Adrenal gland (tissue), 19 donors: ENCODE measurements at regions of chr22 and their contacts with region 1.

Region 1: GRCh38 chr22:23385291-23386244 is 194.5 kb downstream of the IGLL1 start:
- DNase-seq: peak; percentile 66 to 93 (median 85)
- H3K4me3 ChIP-seq: no peak overlapping the region
- H3K27ac ChIP-seq: no peak overlapping the region
- H3K4me1 ChIP-seq: no peaks in the 10 kb centered on the region
- H3K27me3 ChIP-seq: no peaks in the 10 kb centered on the region
- CTCF ChIP-seq: peak; percentile 94 to 99 (median 99)
- POLR2A ChIP-seq: no peak

Region 2: DNA sequence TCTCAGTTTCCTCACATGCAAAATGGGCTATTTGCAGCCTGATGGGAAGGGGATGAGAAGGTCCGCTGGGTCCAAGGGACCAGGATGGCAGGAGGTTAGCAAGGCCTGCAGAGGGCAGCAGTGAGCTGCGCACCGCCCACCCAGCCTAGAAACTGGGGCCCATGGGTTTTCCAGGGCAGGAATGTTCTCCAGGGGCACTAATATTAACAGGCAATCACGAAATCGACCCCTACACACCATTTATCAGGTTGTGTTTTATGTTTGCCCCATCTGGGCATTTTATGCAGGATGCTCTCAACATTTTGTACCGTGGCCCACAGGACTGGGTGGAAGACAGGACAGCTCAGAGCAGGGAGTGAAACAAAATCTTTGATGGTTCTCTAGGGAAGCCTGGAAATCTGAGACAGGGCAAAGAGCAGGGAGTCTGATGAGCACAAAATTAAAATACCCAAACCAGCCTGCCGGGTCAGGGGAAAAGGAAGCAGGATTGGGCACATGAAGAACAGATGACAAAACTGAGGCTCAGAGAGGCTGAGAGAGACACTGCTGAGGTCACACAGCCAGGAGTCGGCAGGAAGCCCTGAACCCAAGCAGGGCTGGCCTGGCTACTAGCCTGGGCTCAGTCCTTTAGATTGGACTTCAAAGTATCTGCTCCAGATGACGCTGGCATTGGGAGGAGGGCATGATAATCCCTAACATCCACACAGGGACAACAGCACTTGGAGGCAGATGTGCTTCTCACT is 206.9 kb before region 1 on chr22:
- intact Hi-C with region 1: loop called in 1 of 2 experiments (anchors 5 kb)
- DNase-seq: peak; percentile 47 to 81 (median 71)
- H3K4me3 ChIP-seq: no peak overlapping the region
- H3K27ac ChIP-seq: peak overlapping the region in 2 of 5 donors; percentile 69 to 92
- H3K4me1 ChIP-seq: peaks cover 27 to 42% of the 10 kb centered on the region in 2 donors
- H3K27me3 ChIP-seq: no peaks in the 10 kb centered on the region
- CTCF ChIP-seq: peak; percentile 92 to 98 (median 97)
- POLR2A ChIP-seq: no peak

Region 3: GRCh38 chr22:23204541-23205157 is 180.9 kb before region 1 on chr22:
- intact Hi-C with region 1: no loop called
- DNase-seq: peak; percentile 49 to 80 (median 65)
- H3K4me3 ChIP-seq: no peak overlapping the region
- H3K27ac ChIP-seq: peak overlapping the region in 3 of 5 donors; percentile 13 to 78 (median 70)
- H3K4me1 ChIP-seq: peaks cover 8 to 43% of the 10 kb centered on the region in 2 donors
- H3K27me3 ChIP-seq: no peaks in the 10 kb centered on the region
- CTCF ChIP-seq: peak in 2 of 6 experiments; percentile 19 to 25
- POLR2A ChIP-seq: no peak

Region 4: DNA sequence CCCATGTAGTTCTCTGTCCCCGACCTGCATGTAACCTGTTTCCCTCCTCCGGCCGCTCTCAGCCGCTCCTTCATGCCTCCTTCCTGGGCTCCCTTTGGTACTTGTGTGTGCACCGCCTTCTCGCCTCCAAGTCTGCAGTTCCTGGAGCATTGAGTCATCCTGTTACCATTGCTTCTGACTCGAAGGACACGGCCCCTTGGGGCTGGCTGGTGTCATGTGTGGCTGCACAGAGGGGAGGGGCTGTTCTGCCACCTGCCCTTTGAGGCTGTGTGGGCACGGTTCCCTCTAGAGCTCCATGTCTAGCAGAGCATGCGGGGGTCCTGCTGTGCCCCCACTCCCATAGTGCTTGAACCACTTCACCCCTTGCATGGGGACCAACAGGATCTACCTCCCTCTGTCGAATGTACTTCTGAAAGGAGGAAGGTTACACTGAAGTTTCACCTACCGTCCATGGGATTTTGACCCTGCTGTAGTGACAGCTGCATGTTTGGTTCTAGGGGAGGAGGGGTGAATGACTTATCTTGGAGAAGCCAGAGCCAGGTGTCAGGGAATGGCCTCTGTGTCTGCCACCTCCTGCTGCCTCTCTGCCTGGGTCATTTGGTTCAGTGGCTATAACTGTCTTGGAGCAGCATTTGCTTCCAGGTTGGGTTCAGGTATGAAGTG is 165.6 kb before region 1 on chr22:
- intact Hi-C with region 1: no loop called
- DNase-seq: peak; percentile 58 to 88 (median 84)
- H3K4me3 ChIP-seq: no peak overlapping the region
- H3K27ac ChIP-seq: peak overlapping the region in 3 of 5 donors; percentile 49 to 54 (median 53)
- H3K4me1 ChIP-seq: peaks cover 17 to 52% of the 10 kb centered on the region in 2 donors
- H3K27me3 ChIP-seq: no peaks in the 10 kb centered on the region
- CTCF ChIP-seq: no peak
- POLR2A ChIP-seq: peak in 1 of 2 donors; percentile 48

Region 5: DNA sequence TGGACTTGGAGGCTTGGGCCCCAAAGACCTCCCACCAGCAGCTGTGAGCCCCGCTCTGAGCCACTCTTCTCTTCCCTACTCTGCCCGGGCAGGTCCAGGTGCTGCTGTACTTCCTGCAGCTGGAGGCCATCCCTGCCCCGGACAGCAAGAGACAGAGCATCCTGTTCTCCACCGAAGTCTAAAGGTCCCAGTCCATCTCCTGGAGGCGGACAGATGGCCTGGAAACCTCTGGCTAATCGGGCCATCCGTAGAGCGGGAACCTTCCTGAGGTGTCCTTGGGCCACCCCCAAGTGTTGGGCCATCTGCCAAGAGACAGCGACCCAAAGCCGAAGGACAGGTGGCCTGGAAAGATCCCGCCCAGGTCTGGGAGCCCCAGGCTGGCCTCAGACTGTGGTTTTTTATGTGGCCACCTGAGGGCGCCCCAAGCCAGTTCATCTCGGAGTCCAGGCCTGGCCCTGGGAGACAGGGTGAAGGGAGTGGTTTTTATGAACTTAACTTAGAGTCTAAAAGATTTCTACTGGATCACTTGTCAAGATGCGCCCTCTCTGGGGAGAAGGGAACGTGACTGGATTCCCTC is 70.1 kb before region 1 on chr22:
- intact Hi-C with region 1: loop called in 1 of 2 experiments (anchors 2 kb)
- DNase-seq: peak; percentile 47 to 89 (median 75)
- H3K4me3 ChIP-seq: no peak overlapping the region
- H3K27ac ChIP-seq: peak overlapping the region in 2 of 5 donors; percentile 16 to 56
- H3K4me1 ChIP-seq: no peaks in the 10 kb centered on the region
- H3K27me3 ChIP-seq: no peaks in the 10 kb centered on the region
- CTCF ChIP-seq: peak; percentile 30 to 85 (median 67)
- POLR2A ChIP-seq: no peak

Region 6: DNA sequence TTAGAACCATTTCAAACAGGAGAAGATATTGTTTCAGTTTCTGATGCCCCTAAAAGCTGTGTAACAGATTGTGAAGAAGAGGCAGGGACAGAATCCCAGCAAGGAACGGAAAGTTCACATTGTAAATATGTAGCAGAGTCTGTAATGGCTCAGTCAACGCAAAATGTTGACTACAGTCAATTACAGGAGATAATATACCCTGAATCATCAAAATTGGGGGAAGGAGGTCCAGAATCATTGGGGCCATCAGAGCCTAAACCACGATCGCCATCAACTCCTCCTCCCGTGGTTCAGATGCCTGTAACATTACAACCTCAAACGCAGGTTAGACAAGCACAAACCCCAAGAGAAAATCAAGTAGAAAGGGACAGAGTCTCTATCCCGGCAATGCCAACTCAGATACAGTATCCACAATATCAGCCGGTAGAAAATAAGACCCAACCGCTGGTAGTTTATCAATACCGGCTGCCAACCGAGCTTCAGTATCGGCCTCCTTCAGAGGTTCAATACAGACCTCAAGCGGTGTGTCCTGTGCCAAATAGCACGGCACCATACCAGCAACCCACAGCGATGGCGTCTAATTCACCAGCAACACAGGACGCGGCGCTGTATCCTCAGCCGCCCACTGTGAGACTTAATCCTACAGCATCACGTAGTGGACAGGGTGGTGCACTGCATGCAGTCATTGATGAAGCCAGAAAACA is 153.7 kb after region 1 on chr22:
- intact Hi-C with region 1: loop called in 1 of 2 experiments (anchors 5 kb)
- DNase-seq: peak; percentile 73 to 95 (median 86)
- H3K4me3 ChIP-seq: no peak overlapping the region
- H3K27ac ChIP-seq: no peak overlapping the region
- H3K4me1 ChIP-seq: peaks cover 0 to 8% of the 10 kb centered on the region in 2 donors
- H3K27me3 ChIP-seq: no peaks in the 10 kb centered on the region
- CTCF ChIP-seq: peak; percentile 79 to 98 (median 96)
- POLR2A ChIP-seq: no peak